Sigmoid colon (tissue), 7 donors: ENCODE measurements at regions of chr12 and their contacts with region 1.

Region 1: GRCh38 chr12:121773011-121773777 is 20.3 kb downstream of the RHOF start:
- DNase-seq: peak; percentile 84
- H3K4me3 ChIP-seq: no peak overlapping the region
- H3K27ac ChIP-seq: peak overlapping the region; percentile 53 to 81 (median 71)
- H3K4me1 ChIP-seq: peaks cover 0 to 25% (median 20%) of the 10 kb centered on the region in 4 donors
- H3K27me3 ChIP-seq: no peaks in the 10 kb centered on the region
- CTCF ChIP-seq: peak; percentile 82 to 94 (median 88)
- EP300 ChIP-seq: no peak
- POLR2A ChIP-seq: no peak

Region 2: DNA sequence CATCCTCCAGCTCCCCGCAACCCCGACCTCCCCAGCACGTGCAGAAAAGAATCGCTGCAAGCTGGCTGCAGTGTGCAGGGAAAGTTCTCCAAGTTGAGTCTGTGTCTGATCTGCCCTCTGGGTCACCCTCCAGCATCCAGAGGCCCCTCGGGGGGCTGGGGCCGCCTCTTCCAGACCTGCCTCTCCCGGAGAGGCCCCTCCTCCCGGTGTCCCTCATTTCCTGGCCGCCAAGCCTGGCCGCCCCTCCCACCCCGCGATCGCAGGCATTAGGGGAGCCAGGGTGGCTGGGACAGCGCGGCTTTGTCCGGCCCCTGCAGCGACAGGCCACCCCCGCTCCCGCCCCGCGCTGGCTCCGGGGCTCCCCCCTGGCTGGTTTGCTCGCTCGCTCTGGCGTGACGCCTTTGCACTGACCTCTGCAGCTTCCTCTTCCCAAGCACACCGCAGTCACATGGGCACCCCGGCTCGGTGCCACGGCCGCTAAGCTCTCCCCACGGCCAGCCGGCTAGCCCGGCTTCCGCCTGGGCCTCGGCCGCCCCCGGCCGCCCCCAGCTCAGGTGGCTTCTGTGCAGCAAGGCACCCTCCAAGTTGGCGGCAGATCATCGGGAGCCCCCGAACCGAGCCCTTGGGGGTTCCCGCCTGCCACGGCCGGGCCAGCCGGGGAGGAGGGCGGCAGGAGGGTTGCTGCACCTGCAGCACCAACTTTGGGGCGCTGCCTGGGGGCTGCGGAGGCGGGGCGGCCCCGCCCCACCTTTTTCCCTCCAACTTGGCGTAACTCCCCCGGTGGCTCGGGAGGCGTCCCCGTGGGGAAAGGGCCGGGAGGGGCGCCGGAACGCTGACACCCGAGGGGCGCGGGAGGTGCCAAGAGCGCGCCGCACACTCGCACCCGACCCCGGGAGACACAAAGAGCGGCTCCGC is 236.0 kb before region 1 on chr12:
- intact Hi-C with region 1: loop called (anchors 10 kb)
- DNase-seq: peak; percentile 95
- H3K4me3 ChIP-seq: peak overlapping the region; percentile 57 to 82 (median 72)
- H3K27ac ChIP-seq: peak overlapping the region; percentile 87 to 96 (median 94)
- H3K4me1 ChIP-seq: peaks cover 0 to 39% (median 33%) of the 10 kb centered on the region in 4 donors
- H3K27me3 ChIP-seq: no peaks in the 10 kb centered on the region
- CTCF ChIP-seq: no peak
- EP300 ChIP-seq: no peak
- POLR2A ChIP-seq: peak; percentile 41 to 49

Region 3: GRCh38 chr12:121697098-121697698 is 76.0 kb before region 1 on chr12:
- intact Hi-C with region 1: loop called (anchors 1 kb)
- DNase-seq: no peak
- H3K4me3 ChIP-seq: no peak overlapping the region
- H3K27ac ChIP-seq: no peak overlapping the region
- H3K4me1 ChIP-seq: peaks cover 0 to 6% (median 3%) of the 10 kb centered on the region in 4 donors
- H3K27me3 ChIP-seq: no peaks in the 10 kb centered on the region
- CTCF ChIP-seq: peak; percentile 39 to 66 (median 60)
- EP300 ChIP-seq: no peak
- POLR2A ChIP-seq: no peak

Region 4: GRCh38 chr12:121811434-121812319 is 38.5 kb after region 1 on chr12:
- intact Hi-C with region 1: loop called (anchors 2 kb)
- DNase-seq: peak; percentile 87
- H3K4me3 ChIP-seq: peak overlapping the region; percentile 43 to 75 (median 59)
- H3K27ac ChIP-seq: peak overlapping the region; percentile 79 to 85 (median 82)
- H3K4me1 ChIP-seq: peaks cover 0 to 57% (median 48%) of the 10 kb centered on the region in 4 donors
- H3K27me3 ChIP-seq: no peaks in the 10 kb centered on the region
- CTCF ChIP-seq: peak; percentile 83 to 100 (median 92)
- EP300 ChIP-seq: no peak
- POLR2A ChIP-seq: no peak

Region 5: GRCh38 chr12:121829250-121829918 is 56.2 kb after region 1 on chr12:
- intact Hi-C with region 1: loop called (anchors 5 kb)
- DNase-seq: no peak
- H3K4me3 ChIP-seq: no peak overlapping the region
- H3K27ac ChIP-seq: peak overlapping the region in 1 of 4 donors; percentile 2
- H3K4me1 ChIP-seq: peaks cover 0 to 9% (median 0%) of the 10 kb centered on the region in 4 donors
- H3K27me3 ChIP-seq: no peaks in the 10 kb centered on the region
- CTCF ChIP-seq: no peak
- EP300 ChIP-seq: no peak
- POLR2A ChIP-seq: no peak